HEK293T (cell line): ENCODE measurements at regions of chr16 and their contacts with region 1.

Region 1: DNA sequence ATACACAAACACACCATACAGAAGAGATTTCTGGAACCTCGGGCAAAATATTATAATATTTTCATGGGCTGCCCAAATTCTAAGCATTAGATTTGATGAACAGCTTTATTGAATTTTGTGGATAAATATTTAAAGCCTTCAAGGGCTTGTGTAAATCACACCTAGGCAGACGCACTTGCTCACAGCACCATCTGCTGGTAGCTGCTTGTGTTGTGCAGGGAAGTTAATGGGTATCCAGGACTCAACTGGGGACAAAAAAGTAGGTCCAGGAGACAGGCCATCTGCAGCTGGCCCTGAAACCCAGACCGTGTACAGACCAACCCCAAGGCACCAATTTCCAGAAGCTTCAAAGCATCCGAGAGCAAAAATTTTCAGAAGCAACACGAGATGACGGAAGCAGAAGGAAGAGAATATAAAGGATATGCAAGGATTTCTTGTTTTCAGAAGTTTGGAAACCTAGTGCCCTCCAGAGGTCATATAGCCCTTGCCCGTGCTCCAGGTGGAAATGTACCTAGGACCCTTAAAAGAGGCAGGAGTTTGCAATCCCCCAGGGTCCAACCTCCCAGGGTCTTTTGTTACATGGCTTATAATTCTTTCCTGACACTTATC is 140.0 kb downstream of the CHD9NB start:
- DNase-seq: peak; percentile 58

Region 2: GRCh38 chr16:52068447-52069074 is 844.1 kb before region 1 on chr16:
- CTCF ChIA-PET with region 1: interaction called, 17 read pairs
- POLR2A ChIA-PET with region 1: no interaction called
- DNase-seq: peak; percentile 14

Region 3: DNA sequence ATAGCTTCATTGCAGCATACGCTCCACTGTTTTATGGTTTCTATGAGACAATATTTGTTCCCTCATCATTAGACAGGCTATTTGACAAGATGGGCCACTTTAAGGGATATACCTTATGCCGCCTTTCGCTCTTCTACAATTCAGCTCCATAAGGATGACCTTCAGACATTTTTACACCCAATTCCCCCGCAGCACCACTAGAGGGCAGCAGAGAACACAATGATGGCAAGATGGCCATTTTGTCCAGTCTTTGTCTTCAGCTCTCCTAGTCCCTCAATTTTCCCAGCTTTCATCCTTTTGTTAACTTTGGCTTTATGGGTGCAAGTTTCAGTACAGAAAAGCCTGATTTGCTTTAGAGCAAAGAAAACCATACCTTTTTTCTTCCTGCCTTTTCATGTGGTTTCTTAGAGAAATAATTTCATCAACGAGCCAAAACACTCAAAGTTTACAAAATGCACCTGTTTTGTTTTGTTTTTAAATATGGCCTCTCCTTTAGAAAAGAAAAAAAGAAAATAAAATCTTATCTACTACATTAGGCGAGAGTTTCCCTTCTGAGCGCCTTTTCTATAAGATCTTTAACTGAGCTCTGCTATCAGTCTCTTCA is 721.0 kb before region 1 on chr16:
- CTCF ChIA-PET with region 1: interaction called, 19 read pairs
- POLR2A ChIA-PET with region 1: no interaction called
- DNase-seq: peak; percentile 72